ENCODE measurements at regions of chr5 and their contacts with region 1.

Region 1: DNA sequence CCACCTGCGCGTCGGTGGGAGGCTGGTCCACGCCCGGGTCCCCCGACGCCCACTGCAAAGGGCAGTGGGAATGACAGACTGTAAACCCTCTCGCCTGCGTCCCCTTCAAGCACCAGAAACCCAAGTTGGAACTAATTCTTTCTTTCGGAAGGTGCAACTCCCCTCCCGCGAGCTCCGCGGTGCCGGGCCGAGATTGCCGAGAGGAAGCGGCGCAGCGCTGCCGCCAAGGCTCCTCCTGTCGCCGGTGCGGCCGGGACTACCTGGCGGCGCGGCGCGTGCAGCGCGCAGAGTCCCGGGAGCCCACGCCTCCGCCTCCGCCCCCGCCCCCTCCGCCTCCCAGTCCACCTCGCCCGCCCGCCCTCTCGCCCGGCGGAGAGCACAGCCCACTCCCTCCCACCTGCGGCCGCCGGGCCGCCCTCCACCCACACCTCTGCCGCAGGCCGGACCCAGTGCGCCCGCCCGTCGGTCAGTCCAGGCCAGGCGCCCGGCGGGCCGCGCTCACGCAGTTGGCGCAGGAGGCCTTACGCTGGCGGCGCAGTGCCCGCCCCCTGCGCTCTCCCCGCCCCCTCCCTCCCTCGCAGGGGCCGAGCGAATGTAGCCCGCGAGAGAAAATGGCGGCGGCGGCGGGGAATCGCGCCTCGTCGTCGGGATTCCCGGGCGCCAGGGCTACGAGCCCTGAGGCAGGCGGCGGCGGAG is at the start of gene MAP3K1:
- DNase-seq: no peak
- H3K4me3 ChIP-seq: peak within 1 kb of the TSS; percentile 81 to 96 (median 94)
- H3K27ac ChIP-seq: peak within 1 kb of the TSS; percentile 85 to 96 (median 92)
- H3K4me1 ChIP-seq: peaks cover 13 to 39% (median 34%) of the 10 kb centered on the region in 4 donors
- H3K27me3 ChIP-seq: no peaks in the 10 kb centered on the region
- CTCF ChIP-seq: no peak
- EP300 ChIP-seq: no peak
- POLR2A ChIP-seq: no peak
- total RNA-seq, gene MAP3K1: 7.2 to 12.3 (median 8.8) TPM

Region 2: GRCh38 chr5:56481428-56482357 is 333.4 kb before region 1 on chr5:
- intact Hi-C with region 1: loop called (anchors 5 kb)
- DNase-seq: no peak
- H3K4me3 ChIP-seq: peak overlapping the region; percentile 66 to 82 (median 74)
- H3K27ac ChIP-seq: peak overlapping the region; percentile 85 to 92 (median 88)
- H3K4me1 ChIP-seq: peaks cover 10 to 38% (median 28%) of the 10 kb centered on the region in 4 donors
- H3K27me3 ChIP-seq: no peaks in the 10 kb centered on the region
- CTCF ChIP-seq: peak in 2 of 3 experiments; percentile 14 to 22
- EP300 ChIP-seq: no peak
- POLR2A ChIP-seq: no peak

Measured in esophagus muscularis mucosa (tissue), 4 donors.